ENCODE measurements at regions of chr1 and their contacts with region 1.

Region 1: GRCh38 chr1:43650310-43651085 is 549 bp downstream of the KDM4A start:
- DNase-seq: peak; percentile 98
- H3K4me3 ChIP-seq: peak overlapping the region; percentile 64 to 71
- H3K27ac ChIP-seq: peak overlapping the region; percentile 95 to 97
- H3K4me1 ChIP-seq: peaks cover 3% of the 10 kb centered on the region
- H3K27me3 ChIP-seq: no peaks in the 10 kb centered on the region
- CTCF ChIP-seq: no peak
- POLR2A ChIP-seq: peak; percentile 97

Region 2: GRCh38 chr1:43554444-43554992 is 96.0 kb before region 1 on chr1:
- intact Hi-C with region 1: loop called (anchors 5 kb)
- DNase-seq: no peak
- H3K4me3 ChIP-seq: no peak overlapping the region
- H3K27ac ChIP-seq: peak overlapping the region in 1 of 2 donors; percentile 97
- H3K4me1 ChIP-seq: peaks cover 52% of the 10 kb centered on the region
- H3K27me3 ChIP-seq: no peaks in the 10 kb centered on the region
- CTCF ChIP-seq: peak in 2 of 4 experiments; percentile 13 to 29
- POLR2A ChIP-seq: no peak

Region 3: DNA sequence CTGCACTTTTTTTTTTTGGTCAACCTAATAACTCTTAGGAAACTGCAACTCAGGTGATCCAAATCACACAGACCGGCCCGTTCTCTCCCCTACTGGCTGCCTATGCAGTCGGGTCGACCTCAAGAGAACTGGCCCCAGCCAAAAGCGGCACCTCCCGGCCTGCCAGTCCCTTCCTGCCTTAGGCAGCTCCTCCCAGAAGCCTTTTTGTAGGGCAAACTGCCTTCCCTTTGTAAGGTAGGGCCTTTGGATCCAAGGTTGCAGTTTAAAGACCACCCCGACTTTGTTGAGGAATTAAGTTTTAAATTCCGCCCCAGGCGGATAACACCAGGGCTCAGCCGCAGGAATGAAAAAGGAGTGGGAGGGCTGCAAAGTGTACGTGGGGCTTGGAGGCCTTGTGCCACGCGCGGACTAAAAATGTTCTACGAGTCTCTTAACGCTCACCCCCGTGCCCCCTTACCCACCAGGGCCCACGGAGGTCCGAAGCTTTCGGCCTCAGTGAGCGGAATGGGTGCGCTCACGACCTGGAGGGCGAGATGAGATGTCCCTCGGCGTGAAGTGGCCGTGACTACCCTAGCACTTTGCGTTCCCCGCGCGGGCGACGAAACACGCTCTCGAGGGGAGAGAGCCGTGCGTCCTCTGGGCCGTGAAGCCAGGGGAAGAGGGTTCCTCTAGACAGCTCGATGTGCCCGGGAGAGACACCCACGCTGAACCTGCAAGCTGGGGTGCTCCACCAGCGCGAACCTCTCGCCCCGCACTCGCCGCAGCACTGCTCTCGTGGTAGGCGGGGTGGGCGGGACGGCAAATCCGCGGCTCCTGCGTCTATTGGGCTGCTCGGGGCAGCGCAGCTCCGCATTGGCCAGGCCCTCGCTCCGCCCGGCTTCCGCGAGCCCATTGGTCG is 56.3 kb after region 1 on chr1:
- intact Hi-C with region 1: loop called (anchors 5 kb)
- DNase-seq: peak; percentile 89
- H3K4me3 ChIP-seq: peak overlapping the region; percentile 67 to 90
- H3K27ac ChIP-seq: peak overlapping the region in 1 of 2 donors; percentile 72
- H3K4me1 ChIP-seq: peaks cover 2% of the 10 kb centered on the region
- H3K27me3 ChIP-seq: no peaks in the 10 kb centered on the region
- CTCF ChIP-seq: no peak
- POLR2A ChIP-seq: peak; percentile 52